K562 (cell line): ENCODE measurements at regions of chr7 and their contacts with region 1.

Region 1: GRCh38 chr7:151008511-151009323 is 15.6 kb downstream of the ATG9B start:
- DNase-seq: peak; percentile 97 to 99 (median 98)
- ATAC-seq: peak; percentile 87
- H3K4me3 ChIP-seq: peak overlapping the region; percentile 57
- H3K27ac ChIP-seq: peak overlapping the region; percentile 85
- H3K4me1 ChIP-seq: peaks cover 43 to 69% of the 10 kb centered on the region in 2 experiments
- H3K27me3 ChIP-seq: no peaks in the 10 kb centered on the region; a peak in 1 of 5 replicates
- CTCF ChIP-seq: peak; percentile 98 to 100 (median 99)
- EP300 ChIP-seq: peak; percentile 69
- POLR2A ChIP-seq: peak; percentile 83
- RAD21 ChIP-seq: peak; percentile 64 to 73

Region 2: GRCh38 chr7:150962553-150963399 is 45.9 kb before region 1 on chr7:
- CTCF ChIA-PET with region 1: interaction called, 15 read pairs
- POLR2A ChIA-PET with region 1: interaction called, 5 read pairs
- in situ Hi-C with region 1: no loop called
- intact Hi-C with region 1: loop called (anchors 1 kb)
- DNase-seq: peak; percentile 81 to 92 (median 86)
- ATAC-seq: peak; percentile 79
- H3K4me3 ChIP-seq: no peak overlapping the region
- H3K27ac ChIP-seq: peak overlapping the region; percentile 99
- H3K4me1 ChIP-seq: peaks cover 77 to 80% of the 10 kb centered on the region in 2 experiments
- H3K27me3 ChIP-seq: no peaks in the 10 kb centered on the region
- CTCF ChIP-seq: peak; percentile 98 to 99 (median 98)
- EP300 ChIP-seq: 0 out of 2 replicates have a peak, but pooled peaks have one; percentile 4
- POLR2A ChIP-seq: no peak
- RAD21 ChIP-seq: peak; percentile 98

Region 3: GRCh38 chr7:151038951-151039849 is 30.5 kb after region 1 on chr7:
- CTCF ChIA-PET with region 1: no interaction called
- POLR2A ChIA-PET with region 1: no interaction called
- in situ Hi-C with region 1: no loop called
- intact Hi-C with region 1: loop called (anchors 1 kb)
- DNase-seq: peak; percentile 99 to 100 (median 99)
- ATAC-seq: peak; percentile 97
- H3K4me3 ChIP-seq: no peak overlapping the region; the same call in 1 of the 2 replicates
- H3K27ac ChIP-seq: peak overlapping the region; percentile 65
- H3K4me1 ChIP-seq: peaks cover 24 to 73% of the 10 kb centered on the region in 2 experiments
- H3K27me3 ChIP-seq: no peaks in the 10 kb centered on the region
- CTCF ChIP-seq: peak in 1 of 3 experiments; percentile 7; a peak in 1 of 6 replicates
- EP300 ChIP-seq: peak; percentile 93
- POLR2A ChIP-seq: peak; percentile 56; the same call in 1 of the 2 replicates
- RAD21 ChIP-seq: peak in 1 of 2 experiments; percentile 28; a peak in 3 of 4 replicates

Region 4: DNA sequence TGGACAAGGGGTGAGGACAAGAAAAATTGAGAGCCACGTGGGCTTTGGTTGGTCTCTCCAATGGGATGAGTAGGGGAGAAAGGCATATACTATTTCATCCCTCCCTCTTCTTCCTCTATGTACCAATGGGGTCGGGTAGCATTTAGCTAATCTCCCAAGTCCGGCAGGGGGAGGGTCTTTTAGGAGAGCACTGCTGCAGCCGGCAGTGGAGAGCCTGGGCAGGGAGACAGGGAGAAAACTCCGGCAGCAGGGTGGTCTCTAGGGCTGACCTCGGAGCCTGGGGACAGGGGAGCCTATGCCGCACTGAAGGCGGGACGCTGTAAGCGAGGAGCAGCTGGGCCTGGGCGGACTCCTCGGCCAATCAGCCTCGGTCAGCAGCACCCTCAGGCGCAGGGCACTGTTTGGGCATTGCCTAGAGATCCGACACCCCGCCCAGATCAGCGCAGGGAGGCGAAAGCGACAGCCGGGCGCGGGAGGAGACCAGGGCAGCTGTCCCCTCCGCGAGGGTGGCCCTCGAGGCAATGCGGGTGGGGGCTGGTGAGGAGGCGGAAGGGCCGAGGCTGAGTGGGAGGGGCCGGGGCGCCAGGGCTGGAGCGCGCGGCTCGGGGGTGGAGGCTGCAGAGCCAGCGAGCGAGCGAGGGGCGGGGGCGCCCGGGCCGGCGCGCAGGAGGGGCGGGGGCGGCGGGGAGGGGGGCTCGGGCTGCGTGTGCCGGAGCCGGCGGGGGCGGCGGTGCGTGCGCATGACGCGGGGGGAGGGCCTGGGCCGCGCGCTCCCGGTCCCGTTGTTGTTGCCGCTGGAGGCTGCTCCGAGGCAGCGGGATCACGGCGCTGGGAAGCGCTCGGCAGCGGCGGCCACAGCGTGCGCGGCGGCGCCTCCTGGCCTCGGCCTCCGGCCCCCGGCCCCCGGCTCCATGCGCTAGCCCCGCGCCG is 77.2 kb after region 1 on chr7 and contains the start of gene AGAP3:
- CTCF ChIA-PET with region 1: no interaction called
- POLR2A ChIA-PET with region 1: interaction called, 8 read pairs
- in situ Hi-C with region 1: no loop called
- intact Hi-C with region 1: loop called (anchors 2 kb)
- DNase-seq: peak; percentile 97 to 99 (median 98)
- ATAC-seq: peak; percentile 69
- H3K4me3 ChIP-seq: peak within 1 kb of the TSS; percentile 67
- H3K27ac ChIP-seq: peak within 1 kb of the TSS; percentile 85
- H3K4me1 ChIP-seq: peaks cover 48 to 79% of the 10 kb centered on the region in 2 experiments
- H3K27me3 ChIP-seq: no peaks in the 10 kb centered on the region
- CTCF ChIP-seq: 0 out of 6 replicates have a peak, but pooled peaks of 2 of the 3 experiments have one; percentile 1 to 11
- EP300 ChIP-seq: 0 out of 2 replicates have a peak, but pooled peaks have one; percentile 7
- POLR2A ChIP-seq: peak; percentile 97
- RAD21 ChIP-seq: no peak
- polyA plus RNA-seq, gene AGAP3: 3.4 to 4.4 TPM

Region 5: DNA sequence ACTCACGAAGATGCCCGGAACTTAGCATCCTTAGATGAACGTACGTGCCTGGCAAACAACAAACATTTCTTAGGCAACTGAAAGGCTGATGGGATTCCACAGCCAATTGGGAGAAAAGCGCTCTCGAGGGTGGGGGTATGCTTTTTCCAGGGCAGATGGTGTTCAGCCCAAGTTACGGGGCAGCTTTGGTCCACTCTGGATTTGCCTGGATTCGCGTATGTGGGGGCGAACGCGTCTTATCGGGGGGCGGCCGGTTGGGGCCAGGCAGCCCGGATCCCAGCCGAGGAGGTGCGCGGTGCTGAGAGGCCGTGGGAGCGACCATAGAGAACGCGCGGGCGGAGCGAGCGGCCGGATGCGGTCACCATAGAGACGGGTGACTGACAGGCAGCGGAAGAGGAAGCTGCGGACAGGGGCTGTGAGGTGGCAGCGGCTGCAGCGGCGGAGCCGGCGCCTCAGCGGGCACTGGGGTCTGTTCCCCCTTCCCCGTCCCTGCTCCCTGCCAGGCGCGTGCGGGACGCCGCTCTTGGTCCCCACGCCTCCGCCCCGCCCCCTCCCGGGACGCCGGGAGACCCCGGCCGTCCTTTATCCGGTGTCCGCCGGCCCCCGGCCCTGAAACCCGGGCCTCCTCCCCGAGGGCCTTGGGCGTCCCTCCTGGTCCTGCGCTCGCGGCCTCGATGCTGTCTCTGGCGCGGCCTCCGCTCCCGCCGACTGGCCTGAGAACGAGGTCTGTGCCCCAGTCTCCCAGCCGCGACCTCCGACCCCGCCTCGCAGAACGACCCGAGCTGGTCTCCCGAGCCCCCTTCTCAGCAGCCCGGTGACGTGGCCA is 223.6 kb after region 1 on chr7 and contains the start of gene CHPF2:
- CTCF ChIA-PET with region 1: no interaction called
- POLR2A ChIA-PET with region 1: interaction called, 4 read pairs
- in situ Hi-C with region 1: no loop called
- intact Hi-C with region 1: loop called (anchors 5 kb)
- DNase-seq: peak; percentile 96 to 98 (median 97)
- ATAC-seq: peak; percentile 97
- H3K4me3 ChIP-seq: peak within 1 kb of the TSS; percentile 92
- H3K27ac ChIP-seq: peak within 1 kb of the TSS; percentile 81
- H3K4me1 ChIP-seq: peaks cover 24 to 42% of the 10 kb centered on the region in 2 experiments; a peak in 4 of 5 replicates
- H3K27me3 ChIP-seq: no peaks in the 10 kb centered on the region
- CTCF ChIP-seq: no peak; a peak in 1 of 6 replicates
- EP300 ChIP-seq: peak; percentile 34; the same call in 1 of the 2 replicates
- POLR2A ChIP-seq: peak; percentile 81
- RAD21 ChIP-seq: no peak
- polyA plus RNA-seq, gene CHPF2: 0.08 to 0.24 TPM